ENCODE measurements at regions of chr10 and their contacts with region 1.

Region 1: GRCh38 chr10:67779465-67780203 is 58.4 kb downstream of the DNAJC12 start:
- DNase-seq: no peak
- ATAC-seq: peak; percentile 67 to 94 (median 78)
- H3K4me3 ChIP-seq: no peak overlapping the region
- H3K27ac ChIP-seq: no peak overlapping the region
- H3K4me1 ChIP-seq: no peaks in the 10 kb centered on the region
- H3K27me3 ChIP-seq: no peaks in the 10 kb centered on the region
- CTCF ChIP-seq: peak; percentile 88

Region 2: DNA sequence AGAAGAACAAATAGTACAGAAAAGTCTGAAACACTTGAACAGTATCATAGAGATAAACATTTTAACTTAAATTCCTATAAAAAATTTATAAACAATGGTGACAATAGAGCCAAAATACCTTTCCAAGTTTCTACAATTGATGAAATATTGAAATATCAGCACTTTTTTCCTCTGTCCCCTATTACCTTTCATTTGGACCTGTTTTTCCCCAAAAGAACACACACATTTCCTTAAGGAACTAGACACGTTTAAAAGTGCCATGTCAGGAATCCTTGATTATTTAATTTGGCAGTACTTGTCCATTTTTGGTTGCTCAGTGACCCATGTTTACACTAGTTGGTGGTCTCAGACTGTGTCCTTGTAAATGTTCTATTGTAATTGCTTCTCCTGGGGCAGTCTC is 246.3 kb before region 1 on chr10:
- intact Hi-C with region 1: loop called in 1 of 2 experiments (anchors 5 kb)
- DNase-seq: no peak
- ATAC-seq: no peak
- H3K4me3 ChIP-seq: no peak overlapping the region
- H3K27ac ChIP-seq: no peak overlapping the region
- H3K4me1 ChIP-seq: no peaks in the 10 kb centered on the region
- H3K27me3 ChIP-seq: no peaks in the 10 kb centered on the region
- CTCF ChIP-seq: no peak

Region 3: DNA sequence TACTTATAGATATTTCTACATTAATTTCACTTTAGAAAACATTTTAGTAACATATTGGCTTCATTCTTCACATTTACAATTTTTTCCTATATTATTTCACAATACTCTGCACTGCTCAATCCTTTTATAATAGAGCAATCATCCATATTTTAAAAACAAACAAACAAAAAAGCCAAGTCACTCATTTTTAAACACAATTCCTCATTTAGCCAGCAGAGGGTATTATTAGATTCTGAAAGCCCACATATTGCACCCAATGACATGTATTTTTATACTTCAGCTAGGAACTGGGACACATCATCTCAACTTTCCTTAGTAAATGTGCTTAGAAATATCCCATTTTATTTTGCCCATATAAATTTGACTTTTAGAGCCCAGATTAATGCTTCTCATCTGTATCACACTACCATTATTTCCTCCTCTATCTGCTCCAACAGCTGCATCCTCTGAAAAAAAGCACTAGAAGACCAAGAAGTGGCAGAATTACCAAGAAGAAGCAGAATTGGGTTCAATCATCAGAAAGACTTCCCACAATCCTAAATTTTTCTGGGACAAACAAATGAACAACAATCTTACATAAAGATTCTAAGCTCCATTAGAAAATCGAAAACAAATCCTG is 113.1 kb before region 1 on chr10:
- intact Hi-C with region 1: loop called (anchors 2 kb)
- DNase-seq: no peak
- ATAC-seq: peak; percentile 45 to 67 (median 52)
- H3K4me3 ChIP-seq: peak overlapping the region; percentile 63
- H3K27ac ChIP-seq: peak overlapping the region; percentile 91
- H3K4me1 ChIP-seq: peaks cover 21% of the 10 kb centered on the region
- H3K27me3 ChIP-seq: no peaks in the 10 kb centered on the region
- CTCF ChIP-seq: peak; percentile 63

Region 4: DNA sequence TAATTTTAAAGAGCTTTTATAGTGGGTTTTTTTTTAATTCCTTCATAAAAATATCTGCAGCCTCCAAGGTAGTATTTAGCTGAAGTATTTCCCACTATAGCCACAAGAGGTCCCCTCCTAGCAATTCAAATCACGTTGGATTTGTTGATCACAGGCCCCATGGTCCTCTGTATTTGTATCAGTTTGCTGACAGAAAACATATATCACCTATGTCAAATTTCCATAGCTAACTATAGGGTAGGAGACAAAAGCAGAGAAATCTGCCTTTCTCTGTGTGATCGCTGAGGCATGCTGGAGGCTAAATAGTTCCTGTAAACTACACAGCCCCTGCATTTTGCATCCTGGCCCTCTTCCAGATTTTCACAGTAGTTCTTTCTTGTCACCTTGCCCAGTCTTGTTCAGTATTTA is 81.9 kb before region 1 on chr10:
- intact Hi-C with region 1: loop called (anchors 1 to 2 kb)
- DNase-seq: no peak
- ATAC-seq: peak; percentile 64 to 88 (median 68)
- H3K4me3 ChIP-seq: no peak overlapping the region
- H3K27ac ChIP-seq: no peak overlapping the region
- H3K4me1 ChIP-seq: peaks cover 9% of the 10 kb centered on the region
- H3K27me3 ChIP-seq: no peaks in the 10 kb centered on the region
- CTCF ChIP-seq: peak; percentile 76

Region 5: GRCh38 chr10:67818320-67818719 is 38.7 kb after region 1 on chr10:
- intact Hi-C with region 1: no loop called
- DNase-seq: no peak
- ATAC-seq: no peak
- H3K4me3 ChIP-seq: no peak overlapping the region
- H3K27ac ChIP-seq: no peak overlapping the region
- H3K4me1 ChIP-seq: no peaks in the 10 kb centered on the region
- H3K27me3 ChIP-seq: no peaks in the 10 kb centered on the region
- CTCF ChIP-seq: no peak